ENCODE measurements at regions of chr1 and their contacts with region 1.

Region 1: DNA sequence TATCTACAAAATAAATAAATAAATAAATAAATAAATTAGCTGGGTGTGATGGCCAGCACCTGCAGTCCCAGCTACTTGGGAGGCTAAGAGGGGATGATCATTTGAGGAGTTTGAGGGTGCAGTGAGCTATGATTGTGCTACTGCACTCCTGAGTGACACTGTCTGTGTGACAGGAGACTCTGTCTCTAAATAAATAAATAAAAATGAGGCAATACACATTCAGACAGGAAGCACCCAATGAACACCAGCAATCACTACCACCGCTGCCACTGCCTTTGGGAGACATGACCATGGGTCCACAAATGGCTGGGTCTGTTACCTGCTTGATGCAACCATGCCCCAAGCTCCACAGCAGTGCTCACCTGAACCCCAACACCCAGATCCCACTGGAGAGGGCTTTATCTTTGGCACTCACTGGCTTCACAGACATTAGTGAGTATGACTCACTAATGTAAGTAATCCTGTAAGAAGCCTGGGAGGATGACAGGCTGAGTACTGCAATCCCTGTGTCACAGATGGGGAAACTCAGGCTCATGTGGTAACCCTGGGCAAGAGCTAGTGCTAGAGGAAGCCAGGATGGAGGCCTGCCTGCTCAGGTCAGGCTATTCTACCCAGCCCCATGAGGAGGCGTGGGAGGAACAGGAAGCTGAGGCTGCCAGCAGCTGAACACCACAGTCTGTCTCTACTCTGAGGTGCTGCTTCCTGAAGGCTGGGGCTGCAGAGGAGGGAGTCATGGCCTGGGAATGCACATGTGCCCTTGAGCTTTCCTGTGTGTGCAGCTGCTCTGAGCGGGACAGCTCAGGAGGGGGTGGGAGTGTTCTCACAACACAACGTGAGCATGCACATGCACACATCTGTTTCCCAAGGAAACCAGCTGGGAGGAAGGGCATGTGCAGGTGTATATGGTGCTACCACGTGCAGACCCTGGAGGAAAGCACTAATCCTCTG is 43.0 kb downstream of the SLC9A1 start:
- DNase-seq: peak; percentile 65 to 81
- ATAC-seq: peak; percentile 94 to 96
- H3K4me3 ChIP-seq: no peak overlapping the region
- H3K27ac ChIP-seq: peak overlapping the region; percentile 67 to 83
- H3K4me1 ChIP-seq: peaks cover 30% of the 10 kb centered on the region
- CTCF ChIP-seq: no peak
- EP300 ChIP-seq: no peak
- POLR2A ChIP-seq: no peak
- RAD21 ChIP-seq: peak; percentile 46 to 48; a peak in 3 of 5 replicates

Region 2: GRCh38 chr1:26889551-26890466 is 222.1 kb before region 1 on chr1 and contains the start of gene GPN2:
- CTCF ChIA-PET with region 1: no interaction called
- POLR2A ChIA-PET with region 1: no interaction called
- DNase-seq: peak; percentile 71 to 75
- ATAC-seq: peak; percentile 94 to 96
- H3K4me3 ChIP-seq: peak within 1 kb of the TSS; percentile 88
- H3K27ac ChIP-seq: peak within 1 kb of the TSS; percentile 88 to 90
- H3K4me1 ChIP-seq: peaks cover 9% of the 10 kb centered on the region; the same call in 2 of the 3 replicates
- CTCF ChIP-seq: no peak
- EP300 ChIP-seq: no peak
- POLR2A ChIP-seq: peak; percentile 46
- RAD21 ChIP-seq: no peak
- polyA plus RNA-seq, gene GPN2: 18.1 and 23.6 TPM in 2 replicates

Region 3: GRCh38 chr1:27097484-27097917 is 14.4 kb before region 1 on chr1:
- CTCF ChIA-PET with region 1: interaction called, 28 read pairs
- POLR2A ChIA-PET with region 1: no interaction called
- DNase-seq: peak; percentile 71
- ATAC-seq: peak; percentile 68 to 83; a peak in 5 of 6 replicates
- H3K4me3 ChIP-seq: no peak overlapping the region
- H3K27ac ChIP-seq: 0 out of 6 replicates have a peak overlapping the region, but pooled peaks of 1 of the 2 experiments have one; percentile 43
- H3K4me1 ChIP-seq: peaks cover 32% of the 10 kb centered on the region
- CTCF ChIP-seq: peak; percentile 79
- EP300 ChIP-seq: no peak
- POLR2A ChIP-seq: no peak
- RAD21 ChIP-seq: peak; percentile 86 to 88

Region 4: DNA sequence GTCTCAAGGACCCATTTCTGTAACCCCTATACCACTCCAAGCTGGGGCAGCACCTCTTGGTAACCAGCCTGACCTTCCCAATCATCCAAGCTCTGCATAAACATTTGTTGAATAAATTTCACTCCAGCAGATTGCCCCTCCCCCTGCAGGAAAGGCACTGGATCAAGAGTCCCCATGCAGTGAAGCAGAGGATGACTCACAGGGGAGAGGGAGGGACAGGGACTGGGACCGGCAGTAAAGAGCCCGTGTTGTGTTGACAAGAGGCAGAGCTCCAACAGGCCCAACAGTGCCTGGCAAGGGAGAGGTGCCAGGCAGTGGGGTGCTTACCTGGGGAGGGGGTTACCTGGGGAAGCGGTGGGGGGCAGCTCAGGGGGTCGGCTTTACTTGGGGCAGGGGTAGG is 10.8 kb after region 1 on chr1:
- CTCF ChIA-PET with region 1: interaction called, 12 read pairs
- POLR2A ChIA-PET with region 1: no interaction called
- DNase-seq: peak; percentile 61 to 77
- ATAC-seq: peak; percentile 85 to 89
- H3K4me3 ChIP-seq: no peak overlapping the region
- H3K27ac ChIP-seq: peak overlapping the region; percentile 41 to 83; a peak in 5 of 6 replicates
- H3K4me1 ChIP-seq: peaks cover 23% of the 10 kb centered on the region
- CTCF ChIP-seq: no peak
- EP300 ChIP-seq: no peak
- POLR2A ChIP-seq: no peak
- RAD21 ChIP-seq: no peak

Region 5: GRCh38 chr1:27135541-27136240 is 23.8 kb after region 1 on chr1:
- CTCF ChIA-PET with region 1: interaction called, 10 read pairs
- POLR2A ChIA-PET with region 1: no interaction called
- DNase-seq: no peak
- ATAC-seq: peak; percentile 39 to 64; a peak in 5 of 6 replicates
- H3K4me3 ChIP-seq: no peak overlapping the region
- H3K27ac ChIP-seq: no peak overlapping the region
- H3K4me1 ChIP-seq: 0 out of 3 replicates have a peak, but pooled peaks cover 3% of the 10 kb centered on the region
- CTCF ChIP-seq: no peak
- EP300 ChIP-seq: no peak
- POLR2A ChIP-seq: no peak
- RAD21 ChIP-seq: no peak

Region 6: DNA sequence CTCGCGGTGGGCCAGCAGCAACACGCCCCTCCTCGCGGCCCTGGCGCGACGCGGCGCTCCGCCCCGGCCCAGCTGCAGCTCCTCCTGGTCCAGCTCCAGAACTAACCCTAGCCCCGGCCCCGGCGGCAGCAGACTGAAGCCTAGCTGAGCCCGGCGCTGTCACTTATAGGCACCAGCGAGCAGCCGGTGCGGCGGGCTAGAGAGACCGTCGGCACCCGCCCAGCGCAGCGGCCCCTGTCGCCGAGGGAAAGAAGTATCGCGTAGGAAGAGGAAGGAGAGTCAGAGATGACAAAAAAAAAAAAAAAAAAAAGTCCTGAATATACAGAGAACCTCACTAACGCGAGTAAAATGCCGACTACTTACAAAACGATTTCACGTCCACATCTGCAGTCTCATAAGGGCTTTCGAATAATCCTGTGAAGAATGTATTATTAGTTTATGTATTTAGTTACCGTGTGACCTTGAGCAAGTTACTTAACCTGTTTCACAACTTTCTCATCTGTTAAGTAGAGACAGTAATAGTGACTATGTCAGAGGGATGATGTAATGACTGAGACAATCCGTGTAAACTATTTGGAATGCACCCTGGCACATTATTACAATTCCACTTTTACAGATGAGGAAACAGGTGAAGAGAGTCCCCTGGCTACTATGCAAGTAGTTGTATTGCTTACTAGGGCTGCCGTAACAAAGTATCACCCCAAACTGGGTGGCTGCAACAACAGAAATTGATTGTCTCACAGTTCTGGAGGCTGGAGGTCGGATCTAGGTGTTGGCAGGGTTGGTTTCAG is 43.3 kb after region 1 on chr1 and contains the start of gene SLC9A1:
- CTCF ChIA-PET with region 1: interaction called, 17 read pairs
- POLR2A ChIA-PET with region 1: interaction called, 23 read pairs
- DNase-seq: peak; percentile 60 to 90
- ATAC-seq: peak; percentile 91 to 96
- H3K4me3 ChIP-seq: peak within 1 kb of the TSS; percentile 91
- H3K27ac ChIP-seq: peak within 1 kb of the TSS; percentile 98 to 100
- H3K4me1 ChIP-seq: peaks cover 28% of the 10 kb centered on the region
- CTCF ChIP-seq: peak; percentile 63
- EP300 ChIP-seq: peak; percentile 15 to 25; a peak in 2 of 5 replicates
- POLR2A ChIP-seq: peak; percentile 97
- RAD21 ChIP-seq: peak; percentile 15 to 28; a peak in 1 of 5 replicates
- polyA plus RNA-seq, gene SLC9A1: 8.0 and 11.1 TPM in 2 replicates

Region 7: DNA sequence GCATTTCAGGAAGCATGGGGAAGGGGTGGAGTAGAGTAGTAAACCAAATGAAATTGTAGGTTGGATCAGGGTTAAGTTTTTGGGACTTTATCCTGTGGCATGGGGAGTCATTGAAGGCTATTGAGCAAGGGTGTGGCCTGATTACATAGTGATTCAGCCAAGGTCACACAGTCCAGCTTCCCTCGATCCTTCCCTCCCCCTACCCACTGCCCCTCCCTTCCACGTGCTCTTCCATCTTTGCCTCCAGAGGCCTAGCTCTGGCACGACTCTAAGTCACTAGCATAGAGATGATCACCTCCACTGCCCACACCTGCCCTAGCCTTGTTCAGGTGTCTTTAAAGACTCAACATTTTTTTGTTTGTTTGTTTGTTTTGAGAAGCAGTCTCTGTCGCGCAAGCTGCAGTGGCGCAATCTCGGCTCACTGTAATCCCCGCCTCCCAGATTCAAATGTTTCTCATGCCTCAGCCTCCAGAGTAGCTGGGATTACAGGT is 80.2 kb after region 1 on chr1:
- CTCF ChIA-PET with region 1: interaction called, 13 read pairs
- POLR2A ChIA-PET with region 1: no interaction called
- DNase-seq: peak; percentile 58 to 88
- ATAC-seq: peak; percentile 91 to 95
- H3K4me3 ChIP-seq: no peak overlapping the region
- H3K27ac ChIP-seq: peak overlapping the region; percentile 73 to 93
- H3K4me1 ChIP-seq: peaks cover 23% of the 10 kb centered on the region
- CTCF ChIP-seq: no peak
- EP300 ChIP-seq: no peak
- POLR2A ChIP-seq: no peak
- RAD21 ChIP-seq: no peak

Region 8: DNA sequence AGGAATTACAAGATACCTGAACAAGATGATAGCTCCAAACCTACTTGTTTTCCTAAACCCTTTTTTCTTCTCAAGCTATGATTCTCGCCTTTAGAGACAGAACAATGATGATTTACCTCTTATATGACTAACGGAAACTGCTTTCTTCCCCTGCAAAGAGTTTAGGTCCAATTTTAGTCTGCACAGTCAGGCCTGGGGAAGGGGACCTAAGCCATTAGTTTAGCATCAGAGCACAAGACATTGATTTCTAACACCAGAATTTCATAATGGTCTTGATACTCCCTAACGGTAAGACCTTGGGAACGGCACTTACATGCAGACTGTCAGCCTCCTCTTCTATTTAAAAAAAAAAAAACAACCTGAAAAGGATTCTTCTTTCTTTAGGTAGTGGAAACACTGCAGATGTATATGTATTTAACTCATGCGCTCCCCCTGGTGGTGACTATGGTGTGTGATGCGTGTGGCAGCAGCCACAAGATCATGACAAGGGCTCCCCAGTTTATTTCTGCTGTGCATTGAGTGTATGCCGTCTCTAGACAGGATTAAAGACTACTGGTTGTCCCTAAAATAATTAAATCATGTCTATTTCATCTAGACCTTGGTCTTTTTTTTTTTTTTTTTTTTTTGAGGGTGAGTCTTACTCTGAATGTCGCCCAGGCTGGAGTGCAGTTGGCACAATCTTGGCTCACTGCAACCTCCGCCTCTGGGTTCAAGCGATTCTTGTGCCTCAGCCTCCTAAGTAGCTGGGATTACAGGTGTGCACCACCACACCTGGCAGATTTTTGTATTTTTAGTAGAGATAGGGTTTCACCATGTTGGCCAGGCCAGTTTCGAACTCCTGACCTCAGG is 172.7 kb after region 1 on chr1:
- CTCF ChIA-PET with region 1: interaction called, 32 read pairs
- POLR2A ChIA-PET with region 1: no interaction called
- DNase-seq: peak; percentile 73 to 84
- ATAC-seq: peak; percentile 93 to 95
- H3K4me3 ChIP-seq: no peak overlapping the region
- H3K27ac ChIP-seq: no peak overlapping the region
- H3K4me1 ChIP-seq: no peaks in the 10 kb centered on the region
- CTCF ChIP-seq: peak; percentile 78
- EP300 ChIP-seq: no peak
- POLR2A ChIP-seq: no peak
- RAD21 ChIP-seq: peak; percentile 73 to 76

Region 9: GRCh38 chr1:27341525-27342252 is 229.8 kb after region 1 on chr1 and contains the start of gene SYTL1:
- CTCF ChIA-PET with region 1: no interaction called
- POLR2A ChIA-PET with region 1: no interaction called
- DNase-seq: peak; percentile 38 to 56
- ATAC-seq: peak; percentile 81 to 84
- H3K4me3 ChIP-seq: peak within 1 kb of the TSS; percentile 19; the same call in 2 of the 3 replicates
- H3K27ac ChIP-seq: peak within 1 kb of the TSS; percentile 57 to 80
- H3K4me1 ChIP-seq: peaks cover 18% of the 10 kb centered on the region
- CTCF ChIP-seq: no peak
- EP300 ChIP-seq: no peak
- POLR2A ChIP-seq: no peak
- RAD21 ChIP-seq: no peak
- polyA plus RNA-seq, gene SYTL1: 0.50 and 0.80 TPM in 2 replicates